Colonic mucosa (tissue), 4 donors: ENCODE measurements at regions of chr3 and their contacts with region 1.

Region 1: GRCh38 chr3:187955076-187955952 is 198.6 kb upstream of the LPP start:
- DNase-seq: peak; percentile 22
- H3K4me3 ChIP-seq: no peak overlapping the region
- H3K27ac ChIP-seq: no peak overlapping the region
- H3K4me1 ChIP-seq: no peaks in the 10 kb centered on the region
- H3K27me3 ChIP-seq: no peaks in the 10 kb centered on the region
- CTCF ChIP-seq: no peak

Region 2: DNA sequence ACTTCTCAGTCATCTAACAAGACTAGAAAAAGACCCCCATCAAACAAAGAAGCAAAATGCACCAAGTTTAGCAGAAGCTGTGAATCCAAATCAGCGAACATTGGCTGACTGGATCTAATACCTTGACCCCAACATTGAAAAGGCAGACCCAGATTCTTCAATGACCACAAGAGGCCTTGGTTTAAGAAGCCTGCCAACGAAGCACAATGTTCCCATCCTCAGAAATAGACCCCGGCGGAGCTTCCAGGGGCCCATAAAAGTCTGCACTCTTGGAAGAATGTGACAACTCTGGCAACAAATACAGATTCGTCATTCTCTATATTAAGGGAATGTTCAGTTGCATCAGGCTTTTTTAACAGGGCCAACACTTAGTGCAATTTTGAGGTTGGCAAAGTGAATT is 97.3 kb before region 1 on chr3:
- intact Hi-C with region 1: no loop called
- DNase-seq: no peak
- H3K4me3 ChIP-seq: no peak overlapping the region
- H3K27ac ChIP-seq: no peak overlapping the region
- H3K4me1 ChIP-seq: no peaks in the 10 kb centered on the region
- H3K27me3 ChIP-seq: no peaks in the 10 kb centered on the region
- CTCF ChIP-seq: no peak

Region 3: GRCh38 chr3:189157232-189158007 is 1202.1 kb after region 1 on chr3:
- intact Hi-C with region 1: loop called (anchors 5 kb)
- DNase-seq: no peak
- H3K4me3 ChIP-seq: no peak overlapping the region
- H3K27ac ChIP-seq: no peak overlapping the region
- H3K4me1 ChIP-seq: no peaks in the 10 kb centered on the region
- H3K27me3 ChIP-seq: no peaks in the 10 kb centered on the region
- CTCF ChIP-seq: no peak